ENCODE measurements at regions of chr20 and their contacts with region 1.

Region 1: DNA sequence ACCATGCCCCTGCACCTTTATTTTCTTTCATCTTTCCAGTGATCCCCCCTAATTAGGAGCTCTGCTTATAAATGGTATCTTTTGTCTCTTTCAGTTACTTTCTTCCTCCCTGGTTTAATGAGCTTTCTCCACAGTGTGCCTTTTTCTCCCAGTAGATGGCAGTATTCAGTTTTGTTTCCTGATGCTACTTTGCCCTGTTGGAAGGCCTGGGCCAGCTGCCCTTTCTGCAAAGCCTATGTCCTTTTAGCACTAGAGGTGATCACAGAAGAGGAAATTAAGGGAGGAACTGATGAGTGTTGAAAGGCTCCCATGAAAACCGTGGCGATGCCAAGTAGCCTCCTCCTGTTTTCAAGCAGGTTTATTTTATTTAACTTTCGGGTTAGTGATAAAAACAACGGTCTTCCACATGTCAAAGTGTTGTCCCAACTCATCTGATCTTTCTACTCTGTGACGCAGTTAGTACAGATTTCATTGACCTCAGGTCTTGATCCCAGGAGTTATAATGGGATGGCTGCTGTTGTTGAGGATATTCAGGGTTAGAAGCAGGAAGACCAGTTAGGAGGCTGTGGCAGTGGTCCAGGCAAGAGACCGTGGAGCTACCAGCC is 184.2 kb upstream of the BMP2 start:
- DNase-seq: no peak
- H3K4me3 ChIP-seq: no peak overlapping the region
- H3K27ac ChIP-seq: no peak overlapping the region
- H3K27me3 ChIP-seq: no peaks in the 10 kb centered on the region
- CTCF ChIP-seq: peak; percentile 78

Region 2: GRCh38 chr20:6265204-6265904 is 317.9 kb before region 1 on chr20:
- CTCF ChIA-PET with region 1: interaction called, 13 read pairs
- POLR2A ChIA-PET with region 1: no interaction called
- DNase-seq: peak; percentile 38
- H3K4me3 ChIP-seq: peak overlapping the region; percentile 25; the same call in 1 of the 2 replicates
- H3K27ac ChIP-seq: no peak overlapping the region
- H3K27me3 ChIP-seq: no peaks in the 10 kb centered on the region
- CTCF ChIP-seq: peak; percentile 60

Region 3: DNA sequence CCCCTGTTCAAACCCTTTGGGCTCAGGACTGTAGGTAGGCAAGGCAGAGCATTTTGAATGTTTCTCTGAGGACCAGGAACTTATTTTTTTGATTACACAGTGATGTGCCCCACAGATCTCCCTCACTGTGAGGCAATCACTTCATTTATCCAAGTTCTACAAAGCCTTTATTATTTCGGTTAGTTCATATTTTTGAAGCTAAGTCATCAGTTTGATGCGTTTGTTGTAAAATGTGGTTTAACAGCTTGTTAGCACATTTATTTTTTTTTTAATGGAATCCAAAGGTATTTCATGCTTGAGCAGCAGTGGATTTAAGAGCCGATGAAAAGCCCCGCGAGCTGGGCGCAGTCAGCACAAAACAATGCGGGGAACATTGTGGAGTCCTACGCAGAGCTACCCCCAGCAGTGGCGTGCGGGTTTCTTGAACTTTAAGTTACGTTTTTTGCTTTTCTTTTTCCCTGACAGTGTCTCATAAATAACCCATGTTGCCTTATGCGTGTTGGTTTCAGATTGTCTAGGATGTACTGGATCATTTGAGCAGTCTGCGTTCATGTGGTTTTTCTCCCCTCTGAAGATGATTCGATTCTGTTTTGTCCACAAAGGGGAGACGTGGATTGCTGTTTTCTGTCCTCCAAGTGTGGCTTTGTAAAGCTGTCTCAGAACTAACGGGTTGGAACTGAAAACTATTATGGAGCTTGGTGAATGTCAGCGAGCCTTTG is 49.3 kb before region 1 on chr20:
- CTCF ChIA-PET with region 1: interaction called, 16 read pairs
- POLR2A ChIA-PET with region 1: no interaction called
- DNase-seq: peak; percentile 80
- H3K4me3 ChIP-seq: peak overlapping the region; percentile 59
- H3K27ac ChIP-seq: peak overlapping the region; percentile 96
- H3K27me3 ChIP-seq: no peaks in the 10 kb centered on the region
- CTCF ChIP-seq: no peak

Region 4: DNA sequence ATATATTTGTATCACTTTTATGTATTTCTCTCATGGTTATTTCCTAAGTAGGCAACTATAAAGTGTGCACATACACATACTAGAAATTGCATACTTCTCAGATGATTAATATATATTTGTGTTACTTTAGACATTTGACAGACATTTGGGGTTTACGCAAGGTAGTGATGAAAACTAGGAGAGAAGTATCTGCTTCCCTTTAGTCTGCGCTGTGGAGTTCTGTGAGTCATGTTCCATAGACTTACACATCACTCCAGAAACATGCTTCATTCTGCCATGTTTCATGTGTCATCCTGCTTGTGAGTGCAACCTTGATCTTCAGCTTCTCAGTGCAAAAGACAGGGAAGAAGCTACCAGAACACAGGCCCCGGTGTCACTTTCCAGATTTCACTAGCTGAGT is 16.4 kb before region 1 on chr20:
- CTCF ChIA-PET with region 1: interaction called, 23 read pairs
- POLR2A ChIA-PET with region 1: no interaction called
- DNase-seq: peak; percentile 78
- H3K4me3 ChIP-seq: no peak overlapping the region
- H3K27ac ChIP-seq: no peak overlapping the region
- H3K27me3 ChIP-seq: no peaks in the 10 kb centered on the region
- CTCF ChIP-seq: no peak

Region 5: GRCh38 chr20:6599876-6600735 is 16.9 kb after region 1 on chr20:
- CTCF ChIA-PET with region 1: interaction called, 32 read pairs
- POLR2A ChIA-PET with region 1: no interaction called
- DNase-seq: no peak
- H3K4me3 ChIP-seq: no peak overlapping the region
- H3K27ac ChIP-seq: no peak overlapping the region
- H3K27me3 ChIP-seq: peaks cover 8% of the 10 kb centered on the region
- CTCF ChIP-seq: no peak

Region 6: GRCh38 chr20:6636209-6637159 is 53.2 kb after region 1 on chr20:
- CTCF ChIA-PET with region 1: interaction called, 13 read pairs
- POLR2A ChIA-PET with region 1: no interaction called
- DNase-seq: peak; percentile 30
- H3K4me3 ChIP-seq: no peak overlapping the region
- H3K27ac ChIP-seq: no peak overlapping the region
- H3K27me3 ChIP-seq: peaks cover 2% of the 10 kb centered on the region
- CTCF ChIP-seq: peak; percentile 70

Region 7: GRCh38 chr20:7285918-7286556 is 702.8 kb after region 1 on chr20:
- CTCF ChIA-PET with region 1: interaction called, 10 read pairs
- POLR2A ChIA-PET with region 1: no interaction called
- DNase-seq: peak; percentile 23
- H3K4me3 ChIP-seq: no peak overlapping the region
- H3K27ac ChIP-seq: no peak overlapping the region
- H3K27me3 ChIP-seq: no peaks in the 10 kb centered on the region
- CTCF ChIP-seq: peak; percentile 84